ENCODE measurements at regions of chr6 and their contacts with region 1.

Region 1: DNA sequence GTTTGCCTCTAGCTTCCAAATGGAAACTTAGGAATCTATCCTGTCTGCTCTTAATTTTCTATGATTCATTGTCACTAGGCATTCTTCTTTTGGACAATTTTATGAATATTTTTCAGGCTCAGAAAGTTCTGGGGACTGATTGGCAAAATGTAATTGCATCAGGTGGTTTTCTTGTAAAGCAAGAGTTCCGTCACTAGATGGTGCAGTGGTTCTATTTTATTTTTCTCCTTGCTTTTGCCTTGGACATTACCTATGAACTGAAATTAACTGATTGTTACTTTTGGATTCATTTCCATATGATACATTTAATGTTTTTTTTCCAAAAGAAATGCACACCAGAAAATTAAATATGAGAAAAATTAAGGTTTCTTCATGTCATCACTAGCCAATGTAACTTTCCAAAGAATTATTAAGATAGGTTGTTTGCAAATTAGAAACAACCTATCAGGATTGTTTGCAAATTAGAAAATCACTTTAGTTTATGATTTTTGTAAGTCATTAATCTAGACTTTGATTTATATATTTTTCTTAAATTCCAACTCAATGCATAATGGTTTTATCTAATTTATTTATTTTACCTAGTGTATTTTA is 48.0 kb downstream of the TMEM170B start:
- DNase-seq: peak; percentile 31
- H3K4me3 ChIP-seq: no peak overlapping the region
- H3K27ac ChIP-seq: no peak overlapping the region
- H3K4me1 ChIP-seq: no peaks in the 10 kb centered on the region
- H3K27me3 ChIP-seq: peaks cover 3% of the 10 kb centered on the region
- CTCF ChIP-seq: peak; percentile 64 to 66

Region 2: GRCh38 chr6:11653028-11653583 is 67.6 kb after region 1 on chr6:
- CTCF ChIA-PET with region 1: no interaction called
- dilution Hi-C with region 1: no loop called
- in situ Hi-C with region 1: no loop called
- intact Hi-C with region 1: loop called (anchors 2 kb)
- DNase-seq: peak; percentile 60
- H3K4me3 ChIP-seq: no peak overlapping the region
- H3K27ac ChIP-seq: no peak overlapping the region
- H3K4me1 ChIP-seq: peaks cover 8% of the 10 kb centered on the region
- H3K27me3 ChIP-seq: no peaks in the 10 kb centered on the region
- CTCF ChIP-seq: no peak

Region 3: DNA sequence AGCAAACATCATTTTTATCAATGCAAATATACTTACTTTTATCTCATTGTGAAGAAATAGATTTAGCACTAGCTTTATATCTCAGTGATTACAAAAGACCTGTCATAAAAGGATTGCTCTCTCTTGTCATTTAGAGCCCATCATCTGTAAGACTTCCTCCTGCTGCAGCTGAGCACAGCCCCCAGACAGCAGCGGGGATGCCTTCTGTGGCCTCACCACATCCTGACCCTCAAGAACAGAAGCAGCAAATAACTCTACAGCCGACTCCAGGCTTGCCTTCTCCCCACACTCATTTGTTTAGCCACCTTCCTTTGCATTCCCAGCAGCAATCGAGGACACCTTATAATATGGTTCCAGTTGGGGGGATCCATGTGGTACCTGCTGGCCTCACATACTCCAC is 577.6 kb after region 1 on chr6:
- CTCF ChIA-PET with region 1: no interaction called
- dilution Hi-C with region 1: no loop called
- in situ Hi-C with region 1: no loop called
- intact Hi-C with region 1: loop called (anchors 10 kb)
- DNase-seq: no peak
- H3K4me3 ChIP-seq: no peak overlapping the region
- H3K27ac ChIP-seq: no peak overlapping the region
- H3K4me1 ChIP-seq: no peaks in the 10 kb centered on the region
- H3K27me3 ChIP-seq: no peaks in the 10 kb centered on the region
- CTCF ChIP-seq: no peak

Region 4: GRCh38 chr6:12245763-12246718 is 660.5 kb after region 1 on chr6:
- CTCF ChIA-PET with region 1: interaction called, 11 read pairs
- dilution Hi-C with region 1: no loop called
- in situ Hi-C with region 1: no loop called
- intact Hi-C with region 1: no loop called
- DNase-seq: peak; percentile 38
- H3K4me3 ChIP-seq: no peak overlapping the region
- H3K27ac ChIP-seq: no peak overlapping the region
- H3K4me1 ChIP-seq: peaks cover 21% of the 10 kb centered on the region
- H3K27me3 ChIP-seq: no peaks in the 10 kb centered on the region
- CTCF ChIP-seq: no peak

Region 5: GRCh38 chr6:12895721-12896120 is 1310.2 kb after region 1 on chr6:
- CTCF ChIA-PET with region 1: no interaction called
- dilution Hi-C with region 1: no loop called
- in situ Hi-C with region 1: loop called in 1 of 2 experiments (anchors 25 kb)
- intact Hi-C with region 1: loop called (anchors 2 kb)
- DNase-seq: no peak
- H3K4me3 ChIP-seq: no peak overlapping the region
- H3K27ac ChIP-seq: no peak overlapping the region
- H3K4me1 ChIP-seq: no peaks in the 10 kb centered on the region
- H3K27me3 ChIP-seq: peaks cover 3% of the 10 kb centered on the region
- CTCF ChIP-seq: no peak

Measured in mammary epithelial cell (primary cell).